Activated naive CD4-positive, alpha-beta T cell treated with anti-CD3 and anti-CD28 coated beads for 36 hours (primary cell): ENCODE measurements at regions of chr10 and their contacts with region 1.

Region 1: GRCh38 chr10:95374597-95375209 is 83.9 kb upstream of the PDLIM1 start:
- DNase-seq: peak; percentile 85
- H3K4me3 Mint-ChIP-seq: no peak overlapping the region
- H3K27ac Mint-ChIP-seq: no peak overlapping the region
- H3K4me1 Mint-ChIP-seq: peaks cover 3% of the 10 kb centered on the region
- H3K27me3 Mint-ChIP-seq: peaks cover 16% of the 10 kb centered on the region

Region 2: DNA sequence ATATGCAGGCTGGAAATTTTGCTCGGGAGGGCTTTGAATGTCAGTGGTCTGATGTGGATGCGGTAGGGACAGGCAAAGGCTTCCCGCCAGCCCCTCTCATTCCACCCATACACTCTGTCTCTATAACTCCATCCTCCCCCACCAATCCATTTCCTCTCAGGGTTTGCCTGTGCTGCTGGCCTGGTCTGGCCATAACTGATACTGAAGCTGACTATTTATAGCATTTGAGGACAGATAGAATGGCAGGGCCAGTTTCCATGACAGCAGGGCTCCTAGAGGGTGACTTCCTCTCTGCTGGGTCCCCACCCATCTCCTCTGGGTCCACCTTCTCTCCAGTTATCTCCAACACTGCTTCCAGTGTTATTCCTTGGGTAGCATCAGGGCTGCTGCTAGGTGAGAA is 77.3 kb before region 1 on chr10:
- CTCF ChIA-PET with region 1: no interaction called
- intact Hi-C with region 1: no loop called
- DNase-seq: no peak
- H3K4me3 Mint-ChIP-seq: no peak overlapping the region
- H3K27ac Mint-ChIP-seq: no peak overlapping the region
- H3K4me1 Mint-ChIP-seq: peaks cover 10% of the 10 kb centered on the region
- H3K27me3 Mint-ChIP-seq: peaks cover 14% of the 10 kb centered on the region

Region 3: DNA sequence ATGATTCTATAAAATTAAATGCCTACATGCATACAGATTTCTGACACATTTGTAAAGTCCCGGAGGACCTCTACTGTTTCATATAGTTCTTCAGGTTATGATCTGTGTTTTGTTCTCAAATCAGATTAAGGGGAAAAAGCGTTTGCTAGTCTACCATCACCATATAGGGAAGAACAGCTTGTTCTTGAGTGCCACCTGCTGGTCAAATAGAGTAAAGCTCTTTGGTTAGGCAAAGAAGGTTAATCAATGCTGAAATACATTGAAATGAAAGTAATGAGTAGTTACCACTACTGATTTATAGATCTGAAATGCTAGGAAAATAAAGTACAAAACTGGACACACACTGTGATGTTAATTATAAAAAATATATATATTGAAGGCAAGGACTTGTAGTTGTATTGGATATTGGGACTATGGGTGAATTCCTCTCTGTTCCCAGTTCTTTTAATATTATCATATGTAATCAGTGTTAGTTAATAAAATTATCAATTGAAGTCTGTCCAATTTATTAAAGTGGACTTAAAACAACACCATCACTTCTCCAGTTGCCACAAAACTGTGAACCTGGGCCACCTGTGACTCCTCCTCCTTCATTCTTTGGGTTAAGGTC is 11.3 kb before region 1 on chr10:
- CTCF ChIA-PET with region 1: interaction called, 61 read pairs
- intact Hi-C with region 1: no loop called
- DNase-seq: peak; percentile 68
- H3K4me3 Mint-ChIP-seq: no peak overlapping the region
- H3K27ac Mint-ChIP-seq: no peak overlapping the region
- H3K4me1 Mint-ChIP-seq: no peaks in the 10 kb centered on the region
- H3K27me3 Mint-ChIP-seq: peaks cover 7% of the 10 kb centered on the region

Region 4: DNA sequence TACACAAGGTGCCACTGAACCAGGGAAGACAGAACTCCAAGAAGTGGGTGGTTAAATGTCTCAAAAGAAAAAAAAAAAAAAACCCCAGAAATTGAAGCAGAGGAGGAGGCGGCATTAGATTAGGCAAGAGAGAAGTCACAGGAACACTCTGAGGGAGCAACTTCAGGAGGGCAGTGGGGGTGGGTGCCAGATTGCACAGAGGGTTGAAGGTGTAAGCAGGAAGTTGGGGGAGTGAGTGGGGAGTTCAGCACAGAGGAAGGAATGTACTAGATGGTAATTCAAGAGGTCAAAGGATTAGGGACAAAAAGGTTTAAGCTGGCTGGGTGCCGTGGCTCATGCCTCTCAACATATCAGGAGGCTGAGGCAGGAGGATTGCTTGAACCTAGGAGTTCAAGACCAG is 26.1 kb after region 1 on chr10:
- CTCF ChIA-PET with region 1: interaction called, 13 read pairs
- intact Hi-C with region 1: no loop called
- DNase-seq: no peak
- H3K4me3 Mint-ChIP-seq: no peak overlapping the region
- H3K27ac Mint-ChIP-seq: no peak overlapping the region
- H3K4me1 Mint-ChIP-seq: no peaks in the 10 kb centered on the region
- H3K27me3 Mint-ChIP-seq: no peaks in the 10 kb centered on the region

Region 5: GRCh38 chr10:95440756-95441546 is 66.2 kb after region 1 on chr10:
- CTCF ChIA-PET with region 1: interaction called, 28 read pairs
- intact Hi-C with region 1: loop called (anchors 1 kb)
- DNase-seq: no peak
- H3K4me3 Mint-ChIP-seq: no peak overlapping the region
- H3K27ac Mint-ChIP-seq: no peak overlapping the region
- H3K4me1 Mint-ChIP-seq: no peaks in the 10 kb centered on the region
- H3K27me3 Mint-ChIP-seq: peaks cover 3% of the 10 kb centered on the region

Region 6: GRCh38 chr10:95601116-95601719 is 226.5 kb after region 1 on chr10:
- CTCF ChIA-PET with region 1: interaction called, 56 read pairs
- intact Hi-C with region 1: loop called (anchors 1 kb)
- DNase-seq: peak; percentile 68
- H3K4me3 Mint-ChIP-seq: no peak overlapping the region
- H3K27ac Mint-ChIP-seq: no peak overlapping the region
- H3K4me1 Mint-ChIP-seq: no peaks in the 10 kb centered on the region
- H3K27me3 Mint-ChIP-seq: no peaks in the 10 kb centered on the region